ENCODE measurements at regions of chr4 and their contacts with region 1.

Region 1: GRCh38 chr4:42568610-42569207 is 88.2 kb downstream of the ATP8A1 start:
- DNase-seq: peak in 4 of 5 donors; percentile 52 to 64 (median 62)
- ATAC-seq: peak in 3 of 4 donors; percentile 79 to 84 (median 81)
- H3K4me3 ChIP-seq: no peak overlapping the region
- H3K27ac ChIP-seq: no peak overlapping the region
- H3K4me1 ChIP-seq: peaks cover 0 to 14% (median 1%) of the 10 kb centered on the region in 12 donors
- H3K27me3 ChIP-seq: no peaks in the 10 kb centered on the region
- CTCF ChIP-seq: peak; percentile 61 to 86 (median 77)
- POLR2A ChIP-seq: no peak

Region 2: DNA sequence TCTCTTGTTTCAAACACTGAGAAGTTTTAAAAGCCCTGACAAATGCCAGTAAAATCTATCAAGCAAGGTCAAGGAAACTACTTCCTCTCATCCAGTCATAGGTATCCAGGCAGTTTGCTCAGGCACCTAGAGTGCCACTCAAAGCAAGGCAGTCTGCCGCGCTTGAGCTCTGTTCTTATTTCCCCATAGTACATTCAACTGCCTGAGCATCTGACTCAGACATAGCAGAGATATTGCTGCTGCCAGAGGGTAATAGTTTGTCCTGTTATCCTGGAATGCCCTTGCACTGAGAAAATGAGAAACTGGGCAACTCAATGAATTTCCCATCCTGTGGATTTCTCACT is 104.3 kb after region 1 on chr4:
- intact Hi-C with region 1: loop called in 1 of 10 experiments (anchors 5 kb)
- DNase-seq: peak in 4 of 5 donors; percentile 28 to 71 (median 51)
- ATAC-seq: peak; percentile 96 to 100 (median 99)
- H3K4me3 ChIP-seq: no peak overlapping the region
- H3K27ac ChIP-seq: peak overlapping the region in 8 of 12 donors; percentile 8 to 42 (median 38)
- H3K4me1 ChIP-seq: peaks cover 0 to 15% (median 5%) of the 10 kb centered on the region in 12 donors
- H3K27me3 ChIP-seq: no peaks in the 10 kb centered on the region
- CTCF ChIP-seq: no peak
- POLR2A ChIP-seq: no peak

Region 3: DNA sequence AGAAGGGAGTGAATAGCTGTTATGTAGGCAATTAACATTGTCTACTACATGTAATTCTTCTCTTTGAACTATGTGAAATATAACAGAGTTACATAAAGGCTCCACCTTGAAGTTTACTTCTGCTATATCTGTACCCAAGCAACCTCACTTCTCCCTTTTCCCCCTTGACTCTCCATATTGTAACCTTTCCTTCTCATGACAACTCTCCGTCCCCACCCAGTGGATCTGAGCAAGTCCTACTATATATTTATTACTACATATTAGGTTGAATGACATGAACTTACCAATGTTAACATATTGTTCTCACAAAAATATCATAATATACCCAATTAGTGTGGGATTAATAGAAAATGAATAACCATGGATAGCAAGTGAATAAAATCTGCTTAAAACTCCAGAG is 181.4 kb after region 1 on chr4:
- intact Hi-C with region 1: loop called (anchors 1 to 10 kb)
- DNase-seq: peak in 3 of 5 donors; percentile 11 to 27 (median 20)
- ATAC-seq: peak in 3 of 4 donors; percentile 68 to 84 (median 79)
- H3K4me3 ChIP-seq: no peak overlapping the region
- H3K27ac ChIP-seq: no peak overlapping the region
- H3K4me1 ChIP-seq: no peaks in the 10 kb centered on the region
- H3K27me3 ChIP-seq: no peaks in the 10 kb centered on the region
- CTCF ChIP-seq: peak in 11 of 12 donors; percentile 19 to 56 (median 43)
- POLR2A ChIP-seq: no peak

Region 4: DNA sequence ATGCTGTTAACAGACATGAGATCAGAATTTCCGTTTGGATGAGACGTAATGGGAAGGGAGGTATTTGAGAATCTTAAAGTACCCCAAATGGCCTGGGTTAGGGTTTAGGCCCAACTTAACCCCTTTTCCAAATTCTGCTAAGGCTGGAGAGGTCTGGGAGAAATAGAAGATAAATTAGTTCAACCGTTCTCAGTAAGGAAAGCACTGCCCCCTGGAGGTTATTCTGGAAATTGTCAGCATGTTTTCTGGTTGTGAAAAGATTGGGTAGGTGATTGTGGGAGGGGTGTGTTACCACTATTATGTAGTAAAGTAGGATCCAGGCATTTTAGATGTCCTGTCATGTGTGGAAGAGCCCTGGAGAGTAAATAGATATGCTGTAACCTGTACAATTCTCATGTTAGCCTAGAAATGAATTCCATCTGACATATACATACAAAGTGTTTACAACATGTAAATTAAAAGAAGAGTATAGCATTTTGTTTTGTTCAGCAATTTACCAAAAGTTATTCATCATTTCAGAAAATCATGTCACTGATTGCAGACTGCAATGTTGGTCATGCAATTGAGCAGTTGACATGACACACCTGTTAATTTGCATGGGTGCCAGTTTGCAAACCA is 297.0 kb after region 1 on chr4:
- intact Hi-C with region 1: loop called (anchors 1 to 5 kb)
- DNase-seq: peak in 3 of 5 donors; percentile 16 to 28 (median 24)
- ATAC-seq: no peak
- H3K4me3 ChIP-seq: no peak overlapping the region
- H3K27ac ChIP-seq: no peak overlapping the region
- H3K4me1 ChIP-seq: no peaks in the 10 kb centered on the region
- H3K27me3 ChIP-seq: peaks cover 0 to 4% (median 0%) of the 10 kb centered on the region in 9 donors
- CTCF ChIP-seq: peak; percentile 61 to 81 (median 70)
- POLR2A ChIP-seq: no peak

Measured in heart left ventricle (tissue), 16 donors.